Panc1 (cell line): ENCODE measurements at regions of chr3 and their contacts with region 1.

Region 1: DNA sequence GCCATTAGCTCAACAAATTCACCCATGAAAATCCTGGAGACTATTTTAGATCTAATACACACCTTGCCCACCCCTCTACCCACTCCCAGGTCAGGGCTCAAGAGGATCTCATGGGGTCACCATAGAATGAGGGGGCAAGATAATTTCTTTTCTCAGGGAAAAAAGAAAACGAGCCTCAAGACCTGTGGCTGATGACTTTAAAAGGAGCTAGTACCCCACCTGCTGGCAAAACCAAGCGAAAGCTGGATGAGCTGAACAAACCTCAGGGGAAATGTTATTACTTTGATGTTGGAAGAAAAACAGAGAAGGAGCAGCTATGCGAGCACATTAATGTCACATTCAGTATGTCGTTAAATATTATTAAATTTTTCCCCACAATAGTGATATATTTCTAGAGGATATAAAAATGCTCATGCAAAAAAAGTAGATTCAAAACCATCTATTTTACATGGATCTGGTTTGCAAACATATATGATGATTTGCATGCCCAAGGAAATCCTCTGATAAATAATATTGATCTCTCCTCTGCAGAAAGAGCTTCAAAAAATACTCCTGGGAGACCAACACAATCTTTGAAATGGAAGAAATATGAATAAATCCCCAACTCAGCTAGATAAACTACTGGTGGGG is 37.7 kb downstream of the PLD1 start:
- DNase-seq: no peak
- ATAC-seq: peak; percentile 73
- H3K4me3 ChIP-seq: no peak overlapping the region
- H3K27ac ChIP-seq: peak overlapping the region; percentile 80
- H3K4me1 ChIP-seq: peaks cover 42% of the 10 kb centered on the region
- H3K27me3 ChIP-seq: no peaks in the 10 kb centered on the region
- CTCF ChIP-seq: peak; percentile 87

Region 2: DNA sequence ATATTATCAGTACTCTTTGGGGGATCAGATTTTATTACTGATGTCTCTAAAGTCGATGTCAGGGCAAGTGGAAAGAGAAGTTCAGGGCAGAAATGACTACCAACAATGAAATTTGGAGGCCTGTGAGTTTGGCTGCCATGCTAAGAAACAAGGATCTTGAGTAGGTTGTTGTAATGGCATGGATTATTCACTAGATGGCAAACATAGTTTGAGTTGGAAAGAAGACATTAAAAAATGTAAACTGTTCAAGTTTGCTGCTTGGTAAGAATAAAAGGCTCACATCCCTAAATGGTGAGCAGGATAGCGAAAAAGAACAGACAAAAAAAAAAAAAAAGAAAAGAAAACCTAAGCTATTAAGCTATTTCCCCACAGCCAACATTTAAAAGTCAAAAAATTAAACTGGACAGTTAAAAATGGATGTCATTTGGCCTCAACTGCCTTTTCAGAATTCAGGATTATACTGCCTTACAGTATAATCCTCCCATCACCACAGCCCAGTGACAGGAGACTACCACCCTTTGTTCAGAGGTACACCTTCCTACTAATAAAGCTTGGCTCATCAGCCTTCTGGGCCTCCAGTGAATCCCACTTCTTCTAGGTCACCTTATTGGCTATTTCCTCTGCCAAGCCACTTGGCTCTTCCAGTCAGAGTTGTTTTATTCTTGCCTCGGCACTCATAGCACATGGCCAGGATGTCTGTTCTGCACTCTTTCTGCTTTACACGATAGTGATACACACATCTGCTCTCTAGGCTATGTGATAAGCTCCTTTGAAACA is 126.0 kb before region 1 on chr3:
- CTCF ChIA-PET with region 1: interaction called, 7 read pairs
- POLR2A ChIA-PET with region 1: interaction called, 3 read pairs
- in situ Hi-C with region 1: no loop called
- intact Hi-C with region 1: loop called (anchors 2 kb)
- DNase-seq: peak; percentile 43
- ATAC-seq: peak; percentile 73
- H3K4me3 ChIP-seq: no peak overlapping the region
- H3K27ac ChIP-seq: no peak overlapping the region; the same call in 1 of the 2 replicates
- H3K4me1 ChIP-seq: no peaks in the 10 kb centered on the region
- H3K27me3 ChIP-seq: no peaks in the 10 kb centered on the region
- CTCF ChIP-seq: peak; percentile 75

Region 3: GRCh38 chr3:171811295-171811912 is 38.9 kb after region 1 on chr3:
- CTCF ChIA-PET with region 1: interaction called, 10 read pairs
- POLR2A ChIA-PET with region 1: no interaction called
- in situ Hi-C with region 1: no loop called
- intact Hi-C with region 1: no loop called
- DNase-seq: peak; percentile 83
- ATAC-seq: peak; percentile 19; the same call in 1 of the 2 replicates
- H3K4me3 ChIP-seq: peak overlapping the region; percentile 69 to 76
- H3K27ac ChIP-seq: peak overlapping the region; percentile 97
- H3K4me1 ChIP-seq: peaks cover 49% of the 10 kb centered on the region
- H3K27me3 ChIP-seq: no peaks in the 10 kb centered on the region
- CTCF ChIP-seq: no peak